B cell (primary cell): ENCODE measurements at regions of chr19 and their contacts with region 1.

Region 1: GRCh38 chr19:18251587-18252369 is 22.5 kb downstream of the IQCN start:
- DNase-seq: peak; percentile 88
- ATAC-seq: peak; percentile 74
- H3K4me3 ChIP-seq: no peak overlapping the region
- H3K4me3 Mint-ChIP-seq: no peak overlapping the region
- H3K27ac ChIP-seq: no peak overlapping the region
- H3K27ac Mint-ChIP-seq: peak overlapping the region; percentile 5
- H3K4me1 ChIP-seq: peaks cover 28 to 38% of the 10 kb centered on the region in 2 donors
- H3K4me1 Mint-ChIP-seq: peaks cover 29% of the 10 kb centered on the region
- H3K27me3 ChIP-seq: peaks cover 0 to 25% (median 2%) of the 10 kb centered on the region in 4 experiments
- H3K27me3 Mint-ChIP-seq: peaks cover 4% of the 10 kb centered on the region
- CTCF ChIP-seq: peak; percentile 87

Region 2: GRCh38 chr19:17530586-17530985 is 721.2 kb before region 1 on chr19:
- CTCF ChIA-PET with region 1: no interaction called
- POLR2A ChIA-PET with region 1: no interaction called
- intact Hi-C with region 1: no loop called
- DNase-seq: no peak
- ATAC-seq: no peak
- H3K4me3 ChIP-seq: peak overlapping the region in 2 of 5 experiments; percentile 20 to 93
- H3K4me3 Mint-ChIP-seq: peak overlapping the region; percentile 57
- H3K27ac ChIP-seq: peak overlapping the region in 1 of 2 donors; percentile 82
- H3K27ac Mint-ChIP-seq: peak overlapping the region; percentile 71
- H3K4me1 ChIP-seq: peaks cover 50 to 58% of the 10 kb centered on the region in 2 donors
- H3K4me1 Mint-ChIP-seq: peaks cover 55% of the 10 kb centered on the region
- H3K27me3 ChIP-seq: no peaks in the 10 kb centered on the region
- H3K27me3 Mint-ChIP-seq: no peaks in the 10 kb centered on the region
- CTCF ChIP-seq: no peak

Region 3: GRCh38 chr19:17966550-17967256 is 285.1 kb before region 1 on chr19 and contains the start of gene KCNN1:
- CTCF ChIA-PET with region 1: no interaction called
- POLR2A ChIA-PET with region 1: no interaction called
- intact Hi-C with region 1: no loop called
- DNase-seq: no peak
- ATAC-seq: peak; percentile 24
- H3K4me3 ChIP-seq: no peak within 1 kb of the TSS
- H3K4me3 Mint-ChIP-seq: peak within 1 kb of the TSS; percentile 78
- H3K27ac ChIP-seq: no peak within 1 kb of the TSS
- H3K27ac Mint-ChIP-seq: peak within 1 kb of the TSS; percentile 20
- H3K4me1 ChIP-seq: peaks cover 4 to 10% of the 10 kb centered on the region in 2 donors
- H3K4me1 Mint-ChIP-seq: peaks cover 8% of the 10 kb centered on the region
- H3K27me3 ChIP-seq: peaks cover 0 to 42% (median 13%) of the 10 kb centered on the region in 4 experiments
- H3K27me3 Mint-ChIP-seq: peaks cover 48% of the 10 kb centered on the region
- CTCF ChIP-seq: no peak
- total RNA-seq, gene KCNN1: not detected in 2 replicates

Region 4: GRCh38 chr19:18007044-18007916 is 244.5 kb before region 1 on chr19:
- CTCF ChIA-PET with region 1: interaction called, 3 read pairs
- POLR2A ChIA-PET with region 1: no interaction called
- intact Hi-C with region 1: loop called (anchors 2 kb)
- DNase-seq: peak; percentile 91
- ATAC-seq: peak; percentile 59
- H3K4me3 ChIP-seq: peak overlapping the region; percentile 31 to 68 (median 56)
- H3K4me3 Mint-ChIP-seq: peak overlapping the region; percentile 98
- H3K27ac ChIP-seq: peak overlapping the region; percentile 90 to 93
- H3K27ac Mint-ChIP-seq: peak overlapping the region; percentile 94
- H3K4me1 ChIP-seq: peaks cover 30 to 41% of the 10 kb centered on the region in 2 donors
- H3K4me1 Mint-ChIP-seq: peaks cover 42% of the 10 kb centered on the region
- H3K27me3 ChIP-seq: no peaks in the 10 kb centered on the region
- H3K27me3 Mint-ChIP-seq: no peaks in the 10 kb centered on the region
- CTCF ChIP-seq: peak; percentile 100

Region 5: DNA sequence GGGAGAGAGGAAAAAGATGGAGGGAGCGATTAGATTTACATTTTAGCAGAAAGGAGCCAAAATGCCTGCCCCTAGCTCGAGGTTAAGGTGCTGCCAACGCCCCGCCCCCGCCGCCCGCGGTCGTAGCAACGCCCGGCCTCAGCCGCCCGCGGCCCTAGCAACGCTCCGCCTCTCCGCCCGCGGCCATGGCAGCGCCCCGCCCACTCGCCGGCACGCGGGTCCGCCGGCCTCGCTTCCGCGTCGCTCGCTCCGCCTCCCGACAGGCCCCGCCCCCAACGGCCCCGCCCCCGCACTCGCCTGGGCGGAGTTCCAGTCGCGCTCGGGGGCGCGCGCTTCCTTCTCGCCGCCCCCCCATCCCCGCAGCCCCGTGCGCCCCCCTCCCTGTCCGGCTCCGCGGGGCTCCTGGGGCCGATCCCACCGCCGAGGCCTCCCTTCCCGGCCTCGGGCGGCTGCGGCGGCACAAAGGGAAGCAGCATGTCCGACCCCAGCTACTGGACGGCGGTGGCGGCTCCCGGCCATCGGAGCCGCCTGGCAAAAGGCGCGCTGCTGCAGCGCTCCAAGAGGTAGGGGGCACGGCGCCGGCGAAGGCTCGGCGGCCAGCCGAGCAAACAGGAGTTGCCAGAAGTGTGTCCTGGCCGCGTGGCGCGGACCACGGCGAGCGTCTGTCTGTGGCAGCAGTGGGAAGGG is 133.9 kb before region 1 on chr19:
- CTCF ChIA-PET with region 1: interaction called, 21 read pairs
- POLR2A ChIA-PET with region 1: no interaction called
- intact Hi-C with region 1: no loop called
- DNase-seq: peak; percentile 96
- ATAC-seq: peak; percentile 94
- H3K4me3 ChIP-seq: peak overlapping the region in 4 of 5 experiments; percentile 64 to 71 (median 66)
- H3K4me3 Mint-ChIP-seq: peak overlapping the region; percentile 86
- H3K27ac ChIP-seq: peak overlapping the region; percentile 47 to 76
- H3K27ac Mint-ChIP-seq: peak overlapping the region; percentile 85
- H3K4me1 ChIP-seq: peaks cover 30 to 36% of the 10 kb centered on the region in 2 donors
- H3K4me1 Mint-ChIP-seq: peaks cover 52% of the 10 kb centered on the region
- H3K27me3 ChIP-seq: no peaks in the 10 kb centered on the region
- H3K27me3 Mint-ChIP-seq: no peaks in the 10 kb centered on the region
- CTCF ChIP-seq: no peak

Region 6: GRCh38 chr19:18167975-18168645 is 83.7 kb before region 1 on chr19:
- CTCF ChIA-PET with region 1: interaction called, 37 read pairs
- POLR2A ChIA-PET with region 1: no interaction called
- intact Hi-C with region 1: loop called (anchors 2 kb)
- DNase-seq: peak; percentile 79
- ATAC-seq: peak; percentile 28
- H3K4me3 ChIP-seq: peak overlapping the region in 4 of 5 experiments; percentile 21 to 47 (median 33)
- H3K4me3 Mint-ChIP-seq: peak overlapping the region; percentile 87
- H3K27ac ChIP-seq: peak overlapping the region; percentile 97 to 99
- H3K27ac Mint-ChIP-seq: peak overlapping the region; percentile 98
- H3K4me1 ChIP-seq: peaks cover 50 to 58% of the 10 kb centered on the region in 2 donors
- H3K4me1 Mint-ChIP-seq: peaks cover 52% of the 10 kb centered on the region
- H3K27me3 ChIP-seq: no peaks in the 10 kb centered on the region
- H3K27me3 Mint-ChIP-seq: no peaks in the 10 kb centered on the region
- CTCF ChIP-seq: peak; percentile 80

Region 7: GRCh38 chr19:18203863-18204393 is 47.9 kb before region 1 on chr19 and contains the start of gene RAB3A:
- CTCF ChIA-PET with region 1: interaction called, 152 read pairs
- POLR2A ChIA-PET with region 1: interaction called, 7 read pairs
- intact Hi-C with region 1: loop called (anchors 1 kb)
- DNase-seq: peak; percentile 100
- ATAC-seq: peak; percentile 83
- H3K4me3 ChIP-seq: peak within 1 kb of the TSS; percentile 74 to 94 (median 91)
- H3K4me3 Mint-ChIP-seq: peak within 1 kb of the TSS; percentile 95
- H3K27ac ChIP-seq: peak within 1 kb of the TSS; percentile 86 to 98
- H3K27ac Mint-ChIP-seq: peak within 1 kb of the TSS; percentile 96
- H3K4me1 ChIP-seq: peaks cover 15 to 29% of the 10 kb centered on the region in 2 donors
- H3K4me1 Mint-ChIP-seq: peaks cover 28% of the 10 kb centered on the region
- H3K27me3 ChIP-seq: peaks cover 0 to 5% (median 1%) of the 10 kb centered on the region in 4 experiments
- H3K27me3 Mint-ChIP-seq: peaks cover 6% of the 10 kb centered on the region
- CTCF ChIP-seq: no peak
- total RNA-seq, gene RAB3A: 9.6 and 10.4 TPM in 2 replicates

Region 8: GRCh38 chr19:18274781-18275356 is 23.1 kb after region 1 on chr19:
- CTCF ChIA-PET with region 1: interaction called, 44 read pairs
- POLR2A ChIA-PET with region 1: interaction called, 5 read pairs
- intact Hi-C with region 1: no loop called
- DNase-seq: no peak
- ATAC-seq: no peak
- H3K4me3 ChIP-seq: no peak overlapping the region
- H3K4me3 Mint-ChIP-seq: no peak overlapping the region
- H3K27ac ChIP-seq: no peak overlapping the region
- H3K27ac Mint-ChIP-seq: no peak overlapping the region
- H3K4me1 ChIP-seq: peaks cover 11 to 33% of the 10 kb centered on the region in 2 donors
- H3K4me1 Mint-ChIP-seq: peaks cover 39% of the 10 kb centered on the region
- H3K27me3 ChIP-seq: no peaks in the 10 kb centered on the region
- H3K27me3 Mint-ChIP-seq: no peaks in the 10 kb centered on the region
- CTCF ChIP-seq: no peak